Ascending aorta (tissue), 2 donors: ENCODE measurements at regions of chr11 and their contacts with region 1.

Region 1: GRCh38 chr11:130314750-130315285 is at the start of gene ZBTB44:
- DNase-seq: peak; percentile 75 to 96
- H3K4me3 ChIP-seq: peak within 1 kb of the TSS; percentile 89 to 98
- H3K27ac ChIP-seq: peak within 1 kb of the TSS; percentile 90 to 95
- H3K4me1 ChIP-seq: peaks cover 0 to 25% of the 10 kb centered on the region in 2 donors
- H3K27me3 ChIP-seq: no peaks in the 10 kb centered on the region
- CTCF ChIP-seq: no peak
- total RNA-seq, gene ZBTB44: 24.4 TPM

Region 2: GRCh38 chr11:130002846-130003716 is 311.7 kb before region 1 on chr11:
- intact Hi-C with region 1: loop called (anchors 5 kb)
- DNase-seq: peak; percentile 76 to 97
- H3K4me3 ChIP-seq: peak overlapping the region; percentile 96 to 99
- H3K27ac ChIP-seq: peak overlapping the region; percentile 97 to 100
- H3K4me1 ChIP-seq: peaks cover 3 to 19% of the 10 kb centered on the region in 2 donors
- H3K27me3 ChIP-seq: no peaks in the 10 kb centered on the region
- CTCF ChIP-seq: no peak

Region 3: GRCh38 chr11:130403271-130403804 is 88.5 kb after region 1 on chr11:
- intact Hi-C with region 1: loop called (anchors 5 kb)
- DNase-seq: peak; percentile 30 to 89
- H3K4me3 ChIP-seq: peak overlapping the region in 1 of 2 donors; percentile 12
- H3K27ac ChIP-seq: peak overlapping the region; percentile 87 to 92
- H3K4me1 ChIP-seq: peaks cover 12 to 36% of the 10 kb centered on the region in 2 donors
- H3K27me3 ChIP-seq: no peaks in the 10 kb centered on the region
- CTCF ChIP-seq: no peak

Region 4: DNA sequence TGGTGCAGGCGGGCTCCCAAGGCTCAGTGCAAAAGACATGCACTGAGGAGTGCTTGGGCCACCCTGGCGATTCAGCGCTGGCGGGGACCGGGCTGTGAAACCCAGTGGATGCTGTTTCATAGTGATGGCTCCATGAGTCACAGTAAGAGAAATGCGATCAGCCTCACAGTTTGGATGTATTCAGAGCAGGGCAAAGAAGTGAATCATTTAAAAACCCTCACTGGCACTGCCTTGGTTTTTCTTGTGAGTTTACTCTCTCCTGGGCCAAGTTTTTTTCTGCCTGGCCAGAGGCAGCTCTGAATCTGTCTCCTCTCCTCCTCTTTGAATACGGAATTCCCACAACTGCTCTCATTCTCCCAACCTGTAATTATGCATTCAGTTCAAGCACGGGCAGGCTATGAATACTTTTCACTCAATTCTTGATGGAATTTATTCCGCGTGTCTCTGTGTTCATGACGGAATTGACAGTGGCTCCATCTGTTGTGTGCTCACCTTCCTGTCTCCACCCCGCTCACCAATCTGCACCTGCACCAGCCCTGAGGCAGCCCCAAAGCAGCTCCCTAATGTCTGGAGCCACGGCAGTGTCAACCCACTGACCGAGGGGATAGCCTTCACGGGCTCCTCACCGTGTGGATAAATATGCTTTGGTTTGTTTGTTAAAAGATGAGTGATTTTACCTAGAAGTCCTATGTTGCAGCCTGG is 98.7 kb after region 1 on chr11:
- intact Hi-C with region 1: no loop called
- DNase-seq: peak in 1 of 2 donors; percentile 82
- H3K4me3 ChIP-seq: no peak overlapping the region
- H3K27ac ChIP-seq: peak overlapping the region; percentile 59 to 81
- H3K4me1 ChIP-seq: peaks cover 9 to 18% of the 10 kb centered on the region in 2 donors
- H3K27me3 ChIP-seq: no peaks in the 10 kb centered on the region
- CTCF ChIP-seq: no peak

Region 5: DNA sequence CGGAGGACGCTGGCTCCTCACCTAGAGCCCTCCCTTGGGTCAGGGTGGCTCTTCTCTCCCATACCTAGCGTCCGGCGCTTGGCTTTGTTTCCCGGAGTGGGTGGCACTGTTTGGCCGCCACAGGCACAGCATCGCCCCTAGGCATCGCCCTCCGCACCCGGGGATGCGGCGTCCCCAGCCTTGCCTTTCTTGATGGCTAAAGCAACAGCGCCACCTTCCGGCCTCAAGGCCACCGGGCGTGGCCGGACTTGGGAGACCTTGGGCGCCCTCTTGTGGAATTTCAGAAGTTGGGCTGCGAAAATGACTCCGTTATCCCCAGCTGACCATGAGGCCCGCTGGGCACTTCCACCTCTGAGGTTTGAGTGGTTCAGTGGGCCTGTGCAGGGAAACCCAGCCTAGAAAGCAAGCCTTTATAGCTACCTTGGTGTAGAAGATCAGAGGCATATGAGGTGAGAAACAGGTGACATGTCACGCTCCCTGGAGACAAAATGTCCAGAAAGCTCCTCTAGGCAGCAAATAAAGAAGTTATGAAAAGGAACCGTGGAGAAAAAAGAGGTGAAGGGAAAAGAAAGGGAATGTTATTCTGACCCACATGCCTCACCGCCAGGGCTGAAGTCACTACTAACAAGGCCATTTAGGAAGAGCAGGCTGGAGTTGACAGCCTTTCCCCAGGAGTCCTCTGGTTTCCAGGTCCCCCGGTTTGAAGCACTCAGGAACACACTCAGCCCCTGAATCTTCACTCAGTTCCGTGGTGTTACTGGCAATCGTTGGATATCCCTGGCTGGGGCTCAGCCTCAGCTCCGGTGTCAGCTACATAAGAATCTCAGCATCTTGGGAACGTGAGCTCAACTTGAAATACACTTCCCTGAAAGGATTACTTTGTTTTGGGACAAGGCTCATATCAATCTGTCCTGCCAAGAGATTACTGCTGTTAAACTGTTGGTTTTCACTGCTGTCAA is 547.4 kb after region 1 on chr11:
- intact Hi-C with region 1: loop called (anchors 10 kb)
- DNase-seq: peak; percentile 66 to 97
- H3K4me3 ChIP-seq: peak overlapping the region; percentile 34 to 45
- H3K27ac ChIP-seq: peak overlapping the region; percentile 86 to 90
- H3K4me1 ChIP-seq: peaks cover 13 to 41% of the 10 kb centered on the region in 2 donors
- H3K27me3 ChIP-seq: no peaks in the 10 kb centered on the region
- CTCF ChIP-seq: peak; percentile 99 to 100 (median 100)

Region 6: GRCh38 chr11:130909650-130910049 is 594.8 kb after region 1 on chr11:
- intact Hi-C with region 1: loop called (anchors 5 kb)
- DNase-seq: no peak
- H3K4me3 ChIP-seq: no peak overlapping the region
- H3K27ac ChIP-seq: peak overlapping the region; percentile 70 to 75
- H3K4me1 ChIP-seq: peaks cover 2 to 18% of the 10 kb centered on the region in 2 donors
- H3K27me3 ChIP-seq: no peaks in the 10 kb centered on the region
- CTCF ChIP-seq: no peak